ENCODE measurements at regions of chr3 and their contacts with region 1.

Region 1: DNA sequence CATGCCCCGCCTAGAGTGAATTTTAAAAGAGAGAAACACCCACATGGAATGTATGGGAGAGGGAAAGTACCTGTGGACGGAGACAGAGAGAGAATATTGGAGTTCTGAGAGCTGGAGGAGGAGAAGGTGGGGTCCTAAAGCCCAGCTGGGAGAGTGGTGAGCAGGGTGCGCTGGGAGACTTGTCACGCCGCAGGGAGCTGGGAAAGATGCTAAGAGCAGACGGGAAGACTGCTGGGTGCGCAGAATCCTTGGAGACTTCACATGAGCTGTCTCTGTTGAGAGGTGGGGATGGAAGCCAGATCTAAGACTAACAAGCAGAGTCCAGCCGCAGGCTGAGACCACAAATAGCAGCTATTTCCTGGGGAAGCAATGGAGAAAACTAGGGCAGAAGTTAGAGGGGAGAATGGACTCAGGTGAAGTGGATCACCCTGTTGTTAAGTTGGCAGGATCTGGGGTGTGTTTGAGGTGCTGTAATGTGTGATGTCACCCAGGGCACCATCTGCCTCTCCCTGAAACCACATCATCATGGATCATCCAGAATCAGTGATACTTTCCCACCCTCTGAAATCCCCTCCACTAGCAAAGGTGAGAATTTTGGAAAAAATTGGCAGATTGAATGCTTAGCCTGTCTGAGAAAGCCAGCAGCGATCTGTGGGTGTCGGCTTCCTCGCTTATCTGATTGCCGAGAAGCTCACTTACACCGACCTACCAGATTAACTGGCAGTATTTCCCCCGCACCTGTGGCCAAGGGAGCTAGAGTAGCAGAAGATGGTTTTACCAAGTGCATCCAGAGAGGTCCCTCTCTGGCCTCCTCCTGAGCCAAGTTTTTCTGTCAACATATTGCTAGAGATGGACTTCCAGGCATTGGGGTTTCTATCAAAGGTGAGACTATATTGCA is 174.8 kb upstream of the BHLHE40 start:
- DNase-seq: peak; percentile 64
- H3K4me3 Mint-ChIP-seq: peak overlapping the region; percentile 30
- H3K27ac Mint-ChIP-seq: peak overlapping the region; percentile 50
- H3K4me1 Mint-ChIP-seq: peaks cover 53% of the 10 kb centered on the region
- H3K27me3 Mint-ChIP-seq: no peaks in the 10 kb centered on the region

Region 2: DNA sequence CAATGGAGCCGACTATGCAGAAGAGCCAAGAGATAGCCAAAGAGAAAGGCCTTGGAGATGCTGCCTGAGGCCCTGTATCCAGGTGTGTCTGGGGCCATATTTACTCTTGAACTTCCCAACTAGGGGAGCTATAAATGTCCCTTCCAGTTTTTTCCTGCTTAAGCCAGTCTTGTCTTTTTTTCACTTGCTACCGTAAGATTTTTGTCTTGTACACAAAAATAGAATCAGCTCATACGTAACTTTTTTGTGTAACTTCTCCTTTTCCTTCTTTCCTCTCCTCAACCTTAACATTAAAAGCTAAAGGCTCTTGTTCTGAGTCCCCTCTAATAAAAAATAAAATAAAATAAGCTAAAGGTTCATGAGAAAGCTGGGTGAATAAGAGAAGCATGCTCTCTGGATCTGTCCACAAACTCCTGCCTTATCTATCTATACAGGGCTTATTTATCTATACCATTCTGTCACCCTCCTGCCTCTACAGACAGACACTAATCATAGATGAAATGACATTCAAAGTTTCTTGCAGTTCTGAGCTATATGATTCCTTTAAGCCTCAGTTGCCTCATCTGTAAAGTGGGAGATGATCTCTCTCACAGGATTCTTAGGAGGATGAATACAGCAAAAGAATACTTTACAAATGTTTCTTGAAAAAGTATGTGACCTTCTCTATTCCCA is 341.9 kb before region 1 on chr3:
- intact Hi-C with region 1: no loop called
- DNase-seq: no peak
- H3K4me3 Mint-ChIP-seq: no peak overlapping the region
- H3K27ac Mint-ChIP-seq: no peak overlapping the region
- H3K4me1 Mint-ChIP-seq: peaks cover 15% of the 10 kb centered on the region
- H3K27me3 Mint-ChIP-seq: no peaks in the 10 kb centered on the region

Region 3: DNA sequence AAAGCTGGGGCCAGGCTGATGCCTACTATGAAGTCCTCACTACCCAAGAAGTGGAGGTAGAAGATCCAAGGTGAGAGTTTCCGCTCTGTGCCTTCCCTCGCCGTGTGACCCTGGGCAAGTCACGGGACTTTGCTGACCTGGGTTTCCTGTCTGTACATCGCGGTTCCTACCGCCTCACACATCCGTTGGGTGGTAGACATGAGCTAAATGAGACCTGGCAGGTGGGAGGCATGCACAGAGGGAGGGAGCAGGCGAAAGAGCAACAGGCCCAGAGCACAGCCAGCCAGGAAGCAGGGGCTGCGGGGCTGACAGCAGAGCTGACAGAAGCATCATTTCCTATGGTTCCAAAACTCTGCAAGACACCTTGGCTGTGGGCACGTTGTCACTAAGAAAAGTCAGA is 17.6 kb after region 1 on chr3:
- intact Hi-C with region 1: loop called (anchors 1 kb)
- DNase-seq: peak; percentile 93
- H3K4me3 Mint-ChIP-seq: peak overlapping the region; percentile 75
- H3K27ac Mint-ChIP-seq: peak overlapping the region; percentile 97
- H3K4me1 Mint-ChIP-seq: peaks cover 84% of the 10 kb centered on the region
- H3K27me3 Mint-ChIP-seq: no peaks in the 10 kb centered on the region

Region 4: DNA sequence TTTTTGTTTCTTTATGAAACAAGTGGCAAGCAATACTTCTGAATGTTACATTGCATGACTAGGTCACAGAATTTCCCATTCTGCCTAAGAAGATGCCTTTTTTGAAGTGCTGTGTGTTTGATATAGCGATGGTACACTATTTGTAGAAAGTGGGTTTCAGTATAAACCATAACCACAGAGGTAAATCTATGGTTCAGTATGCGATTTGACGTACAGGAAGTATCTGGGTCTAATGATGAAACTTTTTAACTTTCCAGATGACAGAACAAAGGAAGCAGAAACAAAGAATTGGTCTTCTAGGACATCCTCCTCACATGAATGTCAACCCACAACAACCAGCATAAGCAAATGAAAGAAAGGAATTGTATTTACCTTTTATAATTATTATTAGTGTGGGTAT is 41.5 kb after region 1 on chr3:
- intact Hi-C with region 1: loop called (anchors 1 kb)
- DNase-seq: peak; percentile 80
- H3K4me3 Mint-ChIP-seq: peak overlapping the region; percentile 59
- H3K27ac Mint-ChIP-seq: peak overlapping the region; percentile 82
- H3K4me1 Mint-ChIP-seq: peaks cover 82% of the 10 kb centered on the region
- H3K27me3 Mint-ChIP-seq: no peaks in the 10 kb centered on the region

Region 5: GRCh38 chr3:4888913-4889846 is 84.8 kb after region 1 on chr3:
- intact Hi-C with region 1: no loop called
- DNase-seq: peak; percentile 87
- H3K4me3 Mint-ChIP-seq: peak overlapping the region; percentile 49
- H3K27ac Mint-ChIP-seq: peak overlapping the region; percentile 89
- H3K4me1 Mint-ChIP-seq: peaks cover 44% of the 10 kb centered on the region
- H3K27me3 Mint-ChIP-seq: no peaks in the 10 kb centered on the region

Measured in activated CD4-positive, alpha-beta T cell treated with anti-CD3 and anti-CD28 coated beads, Interleukin-2, amount 10 ng/mL, durations not matched to agents 24 days and 14 days (primary cell).